Vagina (tissue), 2 donors: ENCODE measurements at regions of chr1 and their contacts with region 1.

Region 1: DNA sequence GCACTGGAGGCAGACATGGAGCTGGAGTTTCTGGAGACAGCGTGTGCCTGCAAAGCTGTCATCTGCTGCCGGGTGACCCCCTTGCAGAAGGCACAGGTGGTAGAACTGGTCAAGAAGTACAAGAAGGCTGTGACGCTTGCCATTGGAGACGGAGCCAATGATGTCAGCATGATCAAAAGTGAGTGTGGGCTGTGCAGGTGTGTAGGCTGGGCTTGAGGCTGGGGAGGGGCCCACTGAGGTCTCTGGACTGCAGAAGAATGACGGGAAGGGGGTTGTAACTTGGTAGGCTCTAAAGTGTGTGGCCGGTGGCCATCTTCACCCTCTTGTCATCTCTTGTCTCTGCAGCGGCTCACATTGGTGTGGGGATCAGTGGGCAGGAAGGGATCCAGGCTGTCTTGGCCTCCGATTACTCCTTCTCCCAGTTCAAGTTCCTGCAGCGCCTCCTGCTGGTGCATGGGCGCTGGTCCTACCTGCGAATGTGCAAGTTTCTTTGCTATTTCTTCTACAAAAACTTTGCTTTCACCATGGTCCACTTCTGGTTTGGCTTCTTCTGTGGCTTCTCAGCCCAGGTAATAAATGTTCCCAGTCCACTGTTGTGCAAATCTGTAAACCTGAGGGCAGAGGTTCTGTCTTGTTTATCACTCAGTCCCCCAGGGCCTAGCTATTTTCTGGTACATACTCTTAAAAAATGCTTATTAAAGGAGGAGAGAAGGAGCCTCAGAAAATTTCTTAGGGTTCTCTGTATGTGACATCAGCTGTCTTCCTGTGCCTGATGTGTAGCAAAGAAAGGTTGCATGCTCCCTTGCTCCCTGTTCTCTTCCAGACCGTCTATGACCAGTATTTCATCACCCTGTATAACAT is 19.9 kb downstream of the ATP8B2 start:
- DNase-seq: no peak
- H3K4me3 ChIP-seq: no peak overlapping the region
- H3K27ac ChIP-seq: no peak overlapping the region
- H3K4me1 ChIP-seq: no peaks in the 10 kb centered on the region
- H3K27me3 ChIP-seq: no peaks in the 10 kb centered on the region
- CTCF ChIP-seq: peak in 1 of 3 experiments; percentile 36
- POLR2A ChIP-seq: no peak

Region 2: GRCh38 chr1:154104433-154105082 is 240.6 kb before region 1 on chr1:
- intact Hi-C with region 1: no loop called
- DNase-seq: no peak
- H3K4me3 ChIP-seq: no peak overlapping the region
- H3K27ac ChIP-seq: no peak overlapping the region
- H3K4me1 ChIP-seq: no peaks in the 10 kb centered on the region
- H3K27me3 ChIP-seq: no peaks in the 10 kb centered on the region
- CTCF ChIP-seq: no peak
- POLR2A ChIP-seq: no peak

Region 3: DNA sequence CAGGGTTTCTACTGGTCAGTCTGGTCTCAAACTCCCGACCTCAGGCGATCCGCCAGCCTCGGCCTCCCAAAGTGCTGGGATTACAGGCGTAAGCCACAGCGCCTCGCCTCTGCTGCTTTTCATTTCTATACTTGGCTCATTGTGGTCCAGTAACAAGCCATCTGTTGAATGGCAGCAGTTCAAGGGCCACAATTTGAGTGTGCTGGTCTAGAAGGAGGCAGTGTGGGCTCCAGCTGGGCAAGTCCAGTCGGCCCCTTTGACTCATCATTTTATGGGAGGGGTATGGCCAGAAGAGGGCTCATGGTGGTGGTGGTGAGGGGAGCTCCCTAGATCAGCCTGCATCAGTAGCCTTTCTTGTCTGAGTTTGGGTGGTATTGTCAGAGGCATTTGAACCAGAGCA is 13.3 kb after region 1 on chr1:
- intact Hi-C with region 1: no loop called
- DNase-seq: no peak
- H3K4me3 ChIP-seq: no peak overlapping the region
- H3K27ac ChIP-seq: no peak overlapping the region
- H3K4me1 ChIP-seq: peaks cover 6% of the 10 kb centered on the region
- H3K27me3 ChIP-seq: no peaks in the 10 kb centered on the region
- CTCF ChIP-seq: no peak
- POLR2A ChIP-seq: no peak

Region 4: GRCh38 chr1:154454386-154455120 is 109.3 kb after region 1 on chr1:
- intact Hi-C with region 1: loop called (anchors 5 kb)
- DNase-seq: no peak
- H3K4me3 ChIP-seq: no peak overlapping the region
- H3K27ac ChIP-seq: no peak overlapping the region
- H3K4me1 ChIP-seq: peaks cover 9% of the 10 kb centered on the region
- H3K27me3 ChIP-seq: no peaks in the 10 kb centered on the region
- CTCF ChIP-seq: no peak
- POLR2A ChIP-seq: no peak